ENCODE measurements at regions of chr3 and their contacts with region 1.

Region 1: GRCh38 chr3:52444860-52445793 is at the start of gene SEMA3G:
- DNase-seq: peak; percentile 39 to 78 (median 63)
- ATAC-seq: peak; percentile 94
- H3K4me3 ChIP-seq: no peak within 1 kb of the TSS
- H3K4me3 Mint-ChIP-seq: no peak within 1 kb of the TSS
- H3K27ac ChIP-seq: no peak within 1 kb of the TSS
- H3K27ac Mint-ChIP-seq: peak within 1 kb of the TSS in 1 of 9 donors; percentile 59
- H3K4me1 ChIP-seq: peaks cover 0 to 9% of the 10 kb centered on the region in 2 donors
- H3K4me1 Mint-ChIP-seq: peaks cover 6 to 13% (median 9%) of the 10 kb centered on the region in 7 donors
- H3K27me3 ChIP-seq: no peaks in the 10 kb centered on the region
- H3K27me3 Mint-ChIP-seq: no peaks in the 10 kb centered on the region
- total RNA-seq, gene SEMA3G: 0.10 to 0.24 TPM in 2 of 5 experiments, not detected in the others

Region 2: GRCh38 chr3:52144034-52144795 is 300.9 kb before region 1 on chr3:
- CTCF ChIA-PET with region 1: no interaction called
- POLR2A ChIA-PET with region 1: no interaction called
- intact Hi-C with region 1: loop called in 1 of 2 experiments (anchors 1 kb)
- DNase-seq: peak; percentile 70 to 88 (median 82)
- ATAC-seq: peak; percentile 98
- H3K4me3 ChIP-seq: no peak overlapping the region
- H3K4me3 Mint-ChIP-seq: peak overlapping the region in 1 of 10 donors; percentile 6
- H3K27ac ChIP-seq: no peak overlapping the region
- H3K27ac Mint-ChIP-seq: peak overlapping the region in 5 of 9 donors; percentile 38 to 80 (median 64)
- H3K4me1 ChIP-seq: peaks cover 5 to 6% of the 10 kb centered on the region in 2 donors
- H3K4me1 Mint-ChIP-seq: peaks cover 5 to 10% (median 7%) of the 10 kb centered on the region in 7 donors
- H3K27me3 ChIP-seq: no peaks in the 10 kb centered on the region
- H3K27me3 Mint-ChIP-seq: no peaks in the 10 kb centered on the region

Region 3: DNA sequence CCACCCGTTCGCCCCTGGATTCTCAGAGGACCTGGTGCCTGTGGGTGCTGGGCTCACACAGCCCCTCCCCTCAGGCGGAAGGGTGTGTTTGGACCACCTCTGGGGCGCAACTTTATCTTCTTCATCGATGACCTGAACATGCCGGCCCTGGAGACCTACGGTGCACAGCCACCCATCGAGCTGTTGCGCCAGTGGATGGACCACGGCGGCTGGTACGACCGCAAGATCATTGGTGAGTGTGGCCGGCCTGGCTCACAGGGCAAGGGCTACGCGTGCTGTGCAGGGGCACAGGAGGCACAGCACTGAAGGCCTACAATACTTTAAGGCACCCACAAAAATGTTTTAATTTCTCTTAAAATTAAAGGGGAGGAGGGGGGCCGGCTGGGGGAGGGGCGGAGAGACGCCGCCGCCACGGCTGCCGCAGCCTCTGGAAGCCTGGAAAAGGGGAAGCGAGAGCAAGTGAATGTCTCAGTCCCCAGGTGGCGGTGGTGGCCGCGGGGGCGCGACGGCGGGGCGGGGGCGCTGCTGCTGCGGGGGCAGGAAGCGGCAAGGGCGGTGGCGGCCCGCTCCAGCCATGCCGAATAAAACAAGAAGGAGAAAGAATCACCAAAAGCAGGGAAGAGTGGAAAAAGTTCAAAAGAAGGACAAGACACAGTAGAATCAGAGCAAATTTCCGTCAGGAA is 72.2 kb before region 1 on chr3:
- CTCF ChIA-PET with region 1: no interaction called
- POLR2A ChIA-PET with region 1: interaction called, 3 read pairs
- intact Hi-C with region 1: loop called in 1 of 2 experiments (anchors 2 kb)
- DNase-seq: peak in 7 of 9 donors; percentile 11 to 34 (median 23)
- ATAC-seq: peak; percentile 65
- H3K4me3 ChIP-seq: no peak overlapping the region
- H3K4me3 Mint-ChIP-seq: peak overlapping the region in 9 of 10 donors; percentile 43 to 72 (median 59)
- H3K27ac ChIP-seq: no peak overlapping the region
- H3K27ac Mint-ChIP-seq: peak overlapping the region in 5 of 9 donors; percentile 7 to 75 (median 44)
- H3K4me1 ChIP-seq: peaks cover 0 to 8% of the 10 kb centered on the region in 2 donors
- H3K4me1 Mint-ChIP-seq: peaks cover 7 to 14% (median 12%) of the 10 kb centered on the region in 7 donors
- H3K27me3 ChIP-seq: no peaks in the 10 kb centered on the region
- H3K27me3 Mint-ChIP-seq: peaks cover 0 to 4% (median 0%) of the 10 kb centered on the region in 5 donors

Region 4: GRCh38 chr3:52428151-52429005 is 16.7 kb before region 1 on chr3:
- CTCF ChIA-PET with region 1: interaction called, 26 read pairs
- POLR2A ChIA-PET with region 1: no interaction called
- intact Hi-C with region 1: loop called (anchors 1 kb)
- DNase-seq: peak in 5 of 9 donors; percentile 21 to 43 (median 28)
- ATAC-seq: peak; percentile 78
- H3K4me3 ChIP-seq: no peak overlapping the region
- H3K4me3 Mint-ChIP-seq: no peak overlapping the region
- H3K27ac ChIP-seq: no peak overlapping the region
- H3K27ac Mint-ChIP-seq: peak overlapping the region in 1 of 9 donors; percentile 57
- H3K4me1 ChIP-seq: no peaks in the 10 kb centered on the region
- H3K4me1 Mint-ChIP-seq: peaks cover 0 to 5% (median 0%) of the 10 kb centered on the region in 7 donors
- H3K27me3 ChIP-seq: no peaks in the 10 kb centered on the region
- H3K27me3 Mint-ChIP-seq: peaks cover 0 to 20% (median 0%) of the 10 kb centered on the region in 5 donors